ENCODE measurements at regions of chr2 and their contacts with region 1.

Region 1: GRCh38 chr2:118088051-118089024 is at the start of gene INSIG2:
- DNase-seq: peak; percentile 94
- H3K4me3 ChIP-seq: peak within 1 kb of the TSS; percentile 44 to 74
- H3K27ac ChIP-seq: peak within 1 kb of the TSS; percentile 52 to 60
- H3K4me1 ChIP-seq: no peaks in the 10 kb centered on the region
- H3K27me3 ChIP-seq: no peaks in the 10 kb centered on the region
- CTCF ChIP-seq: peak in 2 of 4 experiments; percentile 15 to 18
- POLR2A ChIP-seq: peak; percentile 65
- total RNA-seq, gene INSIG2: 12.6 to 15.7 TPM

Region 2: GRCh38 chr2:118186110-118186857 is 97.9 kb after region 1 on chr2:
- intact Hi-C with region 1: loop called (anchors 5 kb)
- DNase-seq: peak; percentile 81
- H3K4me3 ChIP-seq: peak overlapping the region; percentile 46 to 51
- H3K27ac ChIP-seq: peak overlapping the region; percentile 65 to 82
- H3K4me1 ChIP-seq: no peaks in the 10 kb centered on the region
- H3K27me3 ChIP-seq: no peaks in the 10 kb centered on the region
- CTCF ChIP-seq: peak in 2 of 4 experiments; percentile 34
- POLR2A ChIP-seq: peak; percentile 69